ENCODE measurements at regions of chr2 and their contacts with region 1.

Region 1: DNA sequence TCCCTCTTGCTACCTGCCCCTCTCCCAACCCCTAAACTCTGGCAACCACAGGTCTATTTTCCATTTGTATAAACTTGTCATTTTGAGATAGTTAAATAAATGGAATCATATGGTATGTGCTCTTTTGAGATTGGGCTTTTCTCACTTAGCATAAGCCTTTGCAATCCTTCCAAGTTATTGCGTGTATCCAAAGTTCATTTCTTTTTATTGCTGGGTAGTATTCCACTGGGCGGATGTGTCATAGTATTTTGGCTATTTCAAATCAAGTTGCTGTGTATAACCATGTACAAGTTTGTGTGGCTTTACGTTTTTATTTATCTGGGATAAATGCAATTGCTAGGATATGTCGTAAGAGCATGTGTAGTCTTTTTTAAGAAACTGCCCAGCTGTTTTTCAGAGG is 55.5 kb upstream of the CUL3 start:
- DNase-seq: no peak

Region 2: DNA sequence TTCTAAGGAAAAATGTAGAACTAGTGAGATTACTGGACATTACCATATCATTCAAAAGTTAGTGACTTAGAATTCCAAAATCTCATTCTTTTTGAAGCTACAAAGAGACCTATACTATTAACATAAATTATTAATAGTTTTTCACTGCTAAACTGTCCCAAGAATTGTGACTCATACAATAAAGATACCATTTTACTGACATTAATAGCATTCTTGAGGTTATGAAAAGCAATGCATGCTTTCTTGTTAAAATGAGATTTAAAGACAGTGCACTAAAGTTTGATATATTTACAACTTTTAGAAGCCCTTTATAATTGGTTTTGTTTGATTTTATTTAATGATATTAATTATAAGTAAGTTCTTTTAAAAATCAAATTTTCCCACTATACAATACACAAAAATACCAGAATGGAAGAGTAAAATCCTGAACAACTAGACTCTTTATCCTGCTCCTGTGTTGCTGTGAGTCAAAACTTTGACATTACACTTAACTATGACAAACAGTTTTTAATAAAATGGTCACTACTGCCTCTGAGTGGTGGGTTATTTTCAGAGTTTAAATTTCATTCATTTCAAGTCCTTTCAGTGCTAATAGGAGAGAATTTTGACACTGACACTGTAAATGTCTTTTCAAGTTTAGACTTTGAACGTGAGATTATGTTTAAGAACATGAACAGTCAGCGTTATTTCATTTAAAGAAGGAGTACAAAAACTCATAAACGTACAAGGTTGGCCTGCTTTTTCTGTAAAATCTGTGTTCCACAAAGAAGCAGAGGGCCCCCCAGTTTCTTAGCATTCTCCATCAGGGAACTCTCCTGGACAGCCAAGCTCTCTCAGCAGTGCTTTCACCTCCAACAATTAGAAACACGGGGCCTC is 293.3 kb before region 1 on chr2:
- intact Hi-C with region 1: loop called in 1 of 2 experiments (anchors 5 kb)
- DNase-seq: no peak